ENCODE measurements at regions of chr3 and their contacts with region 1.

Region 1: GRCh38 chr3:99856437-99857220 is 39.0 kb downstream of the CMSS1 start:
- DNase-seq: no peak
- ATAC-seq: no peak
- H3K4me3 ChIP-seq: no peak overlapping the region
- H3K27ac ChIP-seq: peak overlapping the region; percentile 71
- H3K4me1 ChIP-seq: peaks cover 48% of the 10 kb centered on the region
- H3K27me3 ChIP-seq: no peaks in the 10 kb centered on the region
- CTCF ChIP-seq: no peak

Region 2: DNA sequence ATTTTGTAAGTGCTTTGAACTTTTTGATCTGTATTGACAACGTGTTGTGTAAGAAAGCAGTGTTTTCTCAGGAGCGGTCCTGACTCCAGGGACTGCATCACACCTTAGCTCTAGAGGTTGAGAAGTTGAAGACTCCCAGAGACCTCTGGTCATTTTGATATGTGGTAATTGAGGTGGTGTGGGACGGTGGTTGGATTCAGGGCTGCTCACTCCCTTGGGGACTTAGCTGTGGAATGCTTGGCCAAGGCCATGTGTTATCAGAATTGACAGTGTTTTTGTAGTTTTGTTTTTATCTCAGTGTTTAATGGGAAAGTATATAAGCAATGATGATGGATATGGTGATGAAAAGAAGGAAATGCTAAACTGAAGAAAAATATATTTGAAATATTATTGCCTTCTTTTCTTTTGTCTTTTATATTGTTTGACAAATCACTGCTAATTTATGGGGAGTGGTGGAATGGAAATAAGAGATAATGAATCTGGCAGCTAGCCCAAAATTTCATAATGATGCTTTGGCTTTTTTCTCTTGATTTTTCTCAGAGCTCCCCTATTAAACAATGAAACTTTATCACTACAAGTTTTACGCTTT is 22.9 kb before region 1 on chr3:
- intact Hi-C with region 1: loop called in 1 of 2 experiments (anchors 2 kb)
- DNase-seq: no peak
- ATAC-seq: no peak
- H3K4me3 ChIP-seq: no peak overlapping the region
- H3K27ac ChIP-seq: peak overlapping the region; percentile 50
- H3K4me1 ChIP-seq: peaks cover 10% of the 10 kb centered on the region
- H3K27me3 ChIP-seq: no peaks in the 10 kb centered on the region
- CTCF ChIP-seq: no peak